Breast epithelium (tissue), 4 donors: ENCODE measurements at regions of chr1 and their contacts with region 1.

Region 1: GRCh38 chr1:15272009-15272788 is 25.2 kb downstream of the FHAD1 start:
- DNase-seq: peak; percentile 47 to 56
- H3K4me3 ChIP-seq: no peak overlapping the region
- H3K27ac ChIP-seq: no peak overlapping the region
- H3K4me1 ChIP-seq: no peaks in the 10 kb centered on the region
- H3K27me3 ChIP-seq: no peaks in the 10 kb centered on the region
- CTCF ChIP-seq: peak; percentile 23 to 84 (median 75)
- POLR2A ChIP-seq: no peak

Region 2: GRCh38 chr1:15257309-15257708 is 14.9 kb before region 1 on chr1:
- intact Hi-C with region 1: loop called (anchors 1 kb)
- DNase-seq: no peak
- H3K4me3 ChIP-seq: no peak overlapping the region
- H3K27ac ChIP-seq: no peak overlapping the region
- H3K4me1 ChIP-seq: no peaks in the 10 kb centered on the region
- H3K27me3 ChIP-seq: no peaks in the 10 kb centered on the region
- CTCF ChIP-seq: no peak
- POLR2A ChIP-seq: no peak

Region 3: DNA sequence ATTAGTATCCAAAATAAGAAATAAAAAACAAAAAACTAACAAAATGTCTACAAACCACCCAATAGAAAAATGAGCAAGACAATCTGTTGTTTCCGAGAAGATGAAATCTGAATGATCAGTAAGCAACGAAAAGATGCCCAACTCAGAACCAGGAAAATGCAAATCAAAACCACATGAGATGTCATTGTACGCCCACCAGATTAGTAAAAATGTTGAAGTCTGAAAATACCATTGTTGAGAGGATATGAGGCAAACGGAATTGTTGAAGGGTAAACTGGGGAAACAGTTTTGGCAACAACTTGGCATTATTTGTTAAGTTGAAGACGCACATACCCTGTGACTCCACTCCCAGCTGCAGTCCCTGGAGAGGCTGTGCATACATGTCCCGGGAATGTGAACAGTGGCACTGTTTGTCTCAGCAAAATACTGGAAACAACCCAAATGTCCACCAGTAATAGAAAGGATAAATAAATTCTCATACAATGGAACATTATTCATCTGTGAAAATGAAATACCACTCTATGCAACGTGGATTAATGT is 693.1 kb after region 1 on chr1:
- intact Hi-C with region 1: no loop called
- DNase-seq: no peak
- H3K4me3 ChIP-seq: no peak overlapping the region
- H3K27ac ChIP-seq: peak overlapping the region in 1 of 2 donors; percentile 46
- H3K4me1 ChIP-seq: no peaks in the 10 kb centered on the region
- H3K27me3 ChIP-seq: no peaks in the 10 kb centered on the region
- CTCF ChIP-seq: no peak
- POLR2A ChIP-seq: no peak